ENCODE measurements at regions of chr17 and their contacts with region 1.

Region 1: DNA sequence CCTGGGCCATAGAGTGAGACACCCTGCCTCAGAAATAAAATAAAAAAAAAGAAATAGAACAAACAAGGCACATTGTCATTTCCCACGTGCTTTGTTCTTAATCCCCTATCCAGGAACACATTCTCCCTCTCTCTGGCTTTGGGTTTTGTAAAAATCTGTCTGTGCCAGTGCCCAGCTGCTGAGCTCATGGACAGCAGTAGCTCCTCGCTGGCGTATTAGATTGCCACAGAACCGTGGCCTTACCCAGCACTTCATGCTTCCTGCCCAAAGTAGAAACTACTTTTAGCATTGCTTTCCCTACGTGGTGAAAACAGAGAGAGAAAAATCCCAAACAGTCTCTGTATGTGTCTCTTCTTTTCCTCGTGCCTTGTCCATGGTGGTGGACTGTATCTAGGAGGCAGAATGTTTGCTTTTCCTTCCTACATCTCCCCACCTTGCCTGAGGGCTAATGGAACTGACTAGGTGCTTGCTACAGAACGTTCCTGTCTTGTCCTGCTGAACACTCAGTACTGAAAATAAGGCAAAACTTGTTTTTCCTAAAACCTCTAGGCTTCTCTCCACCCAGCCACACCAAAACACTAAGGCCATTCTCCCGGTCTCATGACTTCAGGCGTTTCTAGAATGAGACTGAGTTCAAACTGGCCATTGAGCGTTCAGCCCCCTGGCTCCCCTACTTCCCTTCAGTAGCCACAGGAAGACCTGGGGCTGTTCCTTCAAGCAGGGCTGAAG is 26.1 kb downstream of the MNT start:
- DNase-seq: no peak
- ATAC-seq: no peak

Region 2: GRCh38 chr17:2416010-2416734 is 41.5 kb after region 1 on chr17:
- intact Hi-C with region 1: loop called (anchors 5 kb)
- DNase-seq: peak; percentile 96
- ATAC-seq: peak; percentile 91

Region 3: GRCh38 chr17:2453325-2453724 is 78.6 kb after region 1 on chr17:
- intact Hi-C with region 1: no loop called
- DNase-seq: no peak
- ATAC-seq: no peak